Activated naive CD4-positive, alpha-beta T cell treated with anti-CD3 and anti-CD28 coated beads for 36 hours (primary cell): ENCODE measurements at regions of chr11 and their contacts with region 1.

Region 1: DNA sequence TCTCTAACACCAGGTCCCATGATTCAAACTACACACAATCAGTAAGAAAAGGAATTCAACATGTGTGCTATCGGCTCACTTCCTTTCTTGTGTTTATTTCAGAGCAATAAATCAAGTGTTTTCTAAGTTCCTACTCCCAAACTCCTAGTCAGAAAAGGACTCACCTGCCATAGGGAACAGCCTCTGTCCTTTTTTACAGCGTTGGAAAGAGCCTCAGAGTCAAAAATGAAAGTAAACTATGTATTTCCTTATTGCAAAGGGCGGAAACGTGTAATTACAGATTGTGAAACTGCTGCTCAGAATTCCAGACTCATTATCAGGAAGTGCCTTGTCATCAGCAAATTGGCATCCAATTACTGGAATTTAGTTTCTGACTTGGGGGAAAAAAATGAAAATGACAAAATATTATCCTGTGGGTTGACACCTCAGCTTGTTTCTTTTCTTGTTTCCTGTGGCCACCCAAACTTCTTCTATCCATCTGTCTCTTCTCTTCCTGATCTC is at the start of gene CASP4:
- DNase-seq: peak; percentile 21
- H3K4me3 Mint-ChIP-seq: peak within 1 kb of the TSS; percentile 86
- H3K27ac Mint-ChIP-seq: peak within 1 kb of the TSS; percentile 91
- H3K4me1 Mint-ChIP-seq: peaks cover 33% of the 10 kb centered on the region
- H3K27me3 Mint-ChIP-seq: no peaks in the 10 kb centered on the region
- total RNA-seq, gene CASP4: 47.9 to 48.7 TPM

Region 2: GRCh38 chr11:104657083-104657482 is 311.3 kb before region 1 on chr11:
- CTCF ChIA-PET with region 1: no interaction called
- intact Hi-C with region 1: loop called (anchors 1 kb)
- DNase-seq: no peak
- H3K4me3 Mint-ChIP-seq: no peak overlapping the region
- H3K27ac Mint-ChIP-seq: no peak overlapping the region
- H3K4me1 Mint-ChIP-seq: peaks cover 20% of the 10 kb centered on the region
- H3K27me3 Mint-ChIP-seq: peaks cover 2% of the 10 kb centered on the region

Region 3: GRCh38 chr11:104876861-104877431 is 91.5 kb before region 1 on chr11:
- CTCF ChIA-PET with region 1: no interaction called
- intact Hi-C with region 1: loop called (anchors 2 kb)
- DNase-seq: no peak
- H3K4me3 Mint-ChIP-seq: peak overlapping the region; percentile 22
- H3K27ac Mint-ChIP-seq: peak overlapping the region; percentile 59
- H3K4me1 Mint-ChIP-seq: peaks cover 32% of the 10 kb centered on the region
- H3K27me3 Mint-ChIP-seq: no peaks in the 10 kb centered on the region

Region 4: GRCh38 chr11:104946907-104947306 is 21.5 kb before region 1 on chr11:
- CTCF ChIA-PET with region 1: interaction called, 4 read pairs
- intact Hi-C with region 1: loop called (anchors 1 kb)
- DNase-seq: peak; percentile 47
- H3K4me3 Mint-ChIP-seq: no peak overlapping the region
- H3K27ac Mint-ChIP-seq: peak overlapping the region; percentile 6
- H3K4me1 Mint-ChIP-seq: peaks cover 7% of the 10 kb centered on the region
- H3K27me3 Mint-ChIP-seq: no peaks in the 10 kb centered on the region

Region 5: GRCh38 chr11:105034813-105035620 is 66.6 kb after region 1 on chr11 and contains the start of gene CASP1:
- CTCF ChIA-PET with region 1: no interaction called
- intact Hi-C with region 1: loop called (anchors 2 kb)
- DNase-seq: peak; percentile 56
- H3K4me3 Mint-ChIP-seq: peak within 1 kb of the TSS; percentile 92
- H3K27ac Mint-ChIP-seq: peak within 1 kb of the TSS; percentile 98
- H3K4me1 Mint-ChIP-seq: peaks cover 54% of the 10 kb centered on the region
- H3K27me3 Mint-ChIP-seq: no peaks in the 10 kb centered on the region
- total RNA-seq, gene CASP1: 23.8 to 24.5 TPM

Region 6: GRCh38 chr11:105297463-105297862 is 329.1 kb after region 1 on chr11:
- CTCF ChIA-PET with region 1: no interaction called
- intact Hi-C with region 1: loop called (anchors 2 kb)
- DNase-seq: no peak
- H3K4me3 Mint-ChIP-seq: no peak overlapping the region
- H3K27ac Mint-ChIP-seq: peak overlapping the region; percentile 34
- H3K4me1 Mint-ChIP-seq: peaks cover 18% of the 10 kb centered on the region
- H3K27me3 Mint-ChIP-seq: peaks cover 11% of the 10 kb centered on the region